ENCODE measurements at regions of chr11 and their contacts with region 1.

Region 1: DNA sequence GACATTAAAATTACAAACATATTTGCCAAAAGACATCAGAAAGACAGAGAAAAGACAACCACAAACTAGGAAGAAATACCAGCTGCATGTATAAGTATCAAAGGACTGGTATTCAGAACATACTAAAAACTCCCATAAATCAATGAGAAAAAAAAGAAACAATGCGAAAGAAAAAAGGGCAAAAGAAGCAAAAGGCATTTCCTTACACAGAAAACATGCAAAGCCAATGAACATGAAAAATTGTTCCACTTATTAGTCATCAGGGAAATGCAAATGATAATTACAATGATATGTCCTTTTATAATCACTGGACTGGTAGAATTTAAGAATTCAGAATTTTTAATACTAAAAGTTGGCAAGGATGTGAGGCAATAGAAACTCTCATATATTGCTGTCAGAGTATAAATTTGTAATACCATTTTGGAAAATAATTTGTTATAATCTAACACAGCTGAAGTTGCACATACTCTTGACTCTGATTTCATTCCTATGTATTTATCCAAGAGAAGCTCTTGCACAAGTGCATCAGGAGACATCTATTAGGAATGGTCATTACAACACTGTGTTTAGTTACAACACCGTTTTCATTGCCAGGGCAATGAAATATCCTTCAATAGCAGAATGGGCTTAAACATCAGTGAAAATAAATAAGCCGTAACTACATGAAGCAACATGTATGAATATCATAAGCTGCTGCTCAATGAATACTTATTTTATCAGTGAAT is 279.7 kb downstream of the SWAP70 start:
- DNase-seq: no peak
- ATAC-seq: peak; percentile 93 to 98
- H3K4me3 ChIP-seq: no peak overlapping the region
- H3K27ac ChIP-seq: peak overlapping the region; percentile 6 to 60 (median 22)
- H3K4me1 ChIP-seq: peaks cover 0 to 4% of the 10 kb centered on the region in 2 donors
- H3K27me3 ChIP-seq: no peaks in the 10 kb centered on the region
- CTCF ChIP-seq: no peak
- POLR2A ChIP-seq: no peak

Region 2: GRCh38 chr11:9875862-9876261 is 67.7 kb before region 1 on chr11:
- in situ Hi-C with region 1: no loop called
- intact Hi-C with region 1: no loop called
- DNase-seq: no peak
- ATAC-seq: no peak
- H3K4me3 ChIP-seq: no peak overlapping the region
- H3K27ac ChIP-seq: no peak overlapping the region
- H3K4me1 ChIP-seq: no peaks in the 10 kb centered on the region
- H3K27me3 ChIP-seq: no peaks in the 10 kb centered on the region
- CTCF ChIP-seq: no peak
- POLR2A ChIP-seq: no peak

Region 3: DNA sequence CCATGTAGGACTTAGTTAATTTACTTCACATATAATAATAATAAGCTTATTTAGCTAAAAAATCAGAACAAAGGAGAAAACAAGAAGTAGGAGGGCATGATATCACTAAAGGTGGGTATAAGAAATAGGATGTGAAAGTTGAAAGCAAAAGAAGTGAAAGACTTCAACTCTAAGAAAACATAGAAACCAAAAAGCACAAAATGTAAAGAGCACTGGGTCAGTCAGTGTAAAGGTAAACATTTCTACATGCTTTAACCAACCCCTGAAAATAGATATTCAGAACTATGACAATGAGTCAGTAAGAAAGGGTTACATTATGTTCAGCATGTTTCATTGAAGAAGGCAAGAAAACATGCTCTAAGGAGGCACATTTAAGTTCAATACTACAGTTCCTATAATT is 19.2 kb after region 1 on chr11:
- in situ Hi-C with region 1: no loop called
- intact Hi-C with region 1: loop called (anchors 1 kb)
- DNase-seq: no peak
- ATAC-seq: no peak
- H3K4me3 ChIP-seq: no peak overlapping the region
- H3K27ac ChIP-seq: no peak overlapping the region
- H3K4me1 ChIP-seq: no peaks in the 10 kb centered on the region
- H3K27me3 ChIP-seq: no peaks in the 10 kb centered on the region
- CTCF ChIP-seq: no peak
- POLR2A ChIP-seq: no peak